Left cardiac atrium (tissue), 4 donors: ENCODE measurements at regions of chr6 and their contacts with region 1.

Region 1: GRCh38 chr6:168884646-168885086 is 369.0 kb downstream of the THBS2 start:
- DNase-seq: peak; percentile 74
- ATAC-seq: peak; percentile 90

Region 2: GRCh38 chr6:168150551-168151320 is 733.9 kb before region 1 on chr6:
- intact Hi-C with region 1: loop called in 1 of 2 experiments (anchors 5 kb)
- DNase-seq: no peak
- ATAC-seq: peak in 1 of 2 donors; percentile 49

Region 3: DNA sequence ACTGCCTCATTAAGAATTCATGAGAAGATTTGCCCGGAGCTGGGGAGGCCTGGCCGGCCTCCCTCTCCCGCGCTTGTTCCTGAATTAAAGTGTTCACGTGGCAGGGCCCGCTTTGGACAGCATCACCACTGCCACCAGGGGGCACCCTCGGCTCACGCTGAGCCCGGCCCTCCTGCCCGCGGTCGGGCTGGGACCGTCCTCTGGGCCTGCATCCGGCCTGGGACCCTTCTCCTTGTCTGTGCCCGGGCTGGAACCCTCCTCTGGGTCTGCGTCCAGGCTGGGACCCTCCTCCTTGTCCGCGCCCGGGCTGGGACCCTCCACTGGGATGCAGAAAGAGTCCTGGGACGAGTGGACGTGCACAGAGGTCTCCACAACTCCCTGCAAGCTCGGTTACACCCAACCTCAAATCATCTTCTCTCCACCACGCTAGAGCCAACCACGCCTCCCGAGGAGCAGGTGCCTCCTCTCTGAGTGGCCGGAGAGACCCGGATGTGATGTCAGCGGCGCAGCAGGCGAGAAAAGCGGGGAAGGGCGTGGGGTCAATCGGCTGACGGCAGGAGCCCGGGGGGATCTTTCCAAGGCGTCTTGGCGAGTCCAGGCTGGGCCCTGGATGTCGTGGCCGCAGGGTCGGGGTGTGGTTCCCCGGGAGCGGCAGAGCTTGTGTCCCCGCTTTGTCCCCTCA is 514.2 kb before region 1 on chr6:
- intact Hi-C with region 1: loop called (anchors 1 to 5 kb)
- DNase-seq: peak; percentile 74
- ATAC-seq: peak; percentile 83 to 90

Region 4: DNA sequence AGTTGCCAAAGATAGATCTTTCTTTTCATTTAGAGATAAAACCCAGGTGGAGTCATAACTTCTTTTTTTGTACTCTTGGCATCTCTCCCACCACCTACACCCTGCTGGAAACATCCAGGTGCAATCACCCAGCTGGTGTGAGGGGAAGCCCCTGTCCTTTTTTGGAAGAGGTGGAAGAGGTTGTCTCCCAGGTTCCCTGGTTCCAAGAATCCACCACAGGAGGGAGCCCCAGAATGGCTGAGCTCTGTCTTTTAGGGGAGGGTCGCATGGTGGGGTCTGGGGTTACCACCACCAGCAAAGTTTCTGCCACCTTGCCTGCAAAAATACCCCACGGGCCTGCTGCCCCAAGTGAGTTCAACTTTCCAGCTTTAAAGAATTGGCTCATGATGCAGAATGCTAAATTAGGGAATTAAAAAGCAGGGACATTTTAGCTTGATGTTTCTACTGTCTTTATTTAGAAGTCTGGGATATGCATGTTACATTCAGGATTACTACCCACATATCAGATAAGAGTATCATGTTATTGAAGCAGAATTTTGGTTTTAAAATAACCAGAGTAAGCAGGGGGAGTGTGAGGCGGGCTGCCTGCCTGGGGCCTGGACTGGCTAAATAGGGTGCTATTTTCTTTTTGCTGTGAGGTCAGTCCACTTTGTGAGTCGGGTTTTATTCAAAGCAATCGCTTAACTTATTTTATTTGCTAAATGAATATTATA is 432.7 kb before region 1 on chr6:
- intact Hi-C with region 1: loop called in 1 of 2 experiments (anchors 10 kb)
- DNase-seq: no peak
- ATAC-seq: peak; percentile 40 to 42